ENCODE measurements at regions of chr3 and their contacts with region 1.

Region 1: DNA sequence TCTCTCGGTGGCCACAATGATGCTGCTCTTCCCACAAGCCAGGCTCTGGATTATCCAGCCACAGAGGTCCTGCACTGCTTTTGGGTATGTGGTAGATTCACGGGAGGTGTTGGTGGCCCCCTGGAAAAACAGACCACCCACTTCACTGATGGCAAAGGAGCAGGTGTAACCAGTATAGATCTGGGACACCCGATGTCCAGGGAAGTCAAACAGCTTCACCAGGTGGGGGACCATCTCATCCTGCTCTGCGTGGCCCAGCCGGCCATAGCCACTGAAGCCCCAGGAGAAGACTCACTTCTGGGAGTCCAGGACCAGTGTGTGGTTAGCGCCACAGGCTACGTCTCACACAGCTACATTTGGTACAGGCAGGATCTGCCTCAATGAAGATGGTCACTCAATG is 62.6 kb downstream of the CHCHD6 start:
- H3K4me3 ChIP-seq: no peak overlapping the region
- H3K27ac ChIP-seq: no peak overlapping the region
- H3K4me1 ChIP-seq: no peaks in the 10 kb centered on the region
- CTCF ChIP-seq: no peak

Region 2: GRCh38 chr3:125662675-125663074 is 1104.0 kb before region 1 on chr3:
- CTCF ChIA-PET with region 1: no interaction called
- POLR2A ChIA-PET with region 1: no interaction called
- H3K4me3 ChIP-seq: no peak overlapping the region
- H3K27ac ChIP-seq: no peak overlapping the region
- H3K4me1 ChIP-seq: no peaks in the 10 kb centered on the region
- CTCF ChIP-seq: no peak

Region 3: GRCh38 chr3:126752303-126752842 is 14.3 kb before region 1 on chr3:
- CTCF ChIA-PET with region 1: interaction called, 11 read pairs
- POLR2A ChIA-PET with region 1: no interaction called
- H3K4me3 ChIP-seq: no peak overlapping the region
- H3K27ac ChIP-seq: no peak overlapping the region
- H3K4me1 ChIP-seq: no peaks in the 10 kb centered on the region
- CTCF ChIP-seq: peak; percentile 71

Measured in HEK293 (cell line).